ENCODE measurements at regions of chr4 and their contacts with region 1.

Region 1: DNA sequence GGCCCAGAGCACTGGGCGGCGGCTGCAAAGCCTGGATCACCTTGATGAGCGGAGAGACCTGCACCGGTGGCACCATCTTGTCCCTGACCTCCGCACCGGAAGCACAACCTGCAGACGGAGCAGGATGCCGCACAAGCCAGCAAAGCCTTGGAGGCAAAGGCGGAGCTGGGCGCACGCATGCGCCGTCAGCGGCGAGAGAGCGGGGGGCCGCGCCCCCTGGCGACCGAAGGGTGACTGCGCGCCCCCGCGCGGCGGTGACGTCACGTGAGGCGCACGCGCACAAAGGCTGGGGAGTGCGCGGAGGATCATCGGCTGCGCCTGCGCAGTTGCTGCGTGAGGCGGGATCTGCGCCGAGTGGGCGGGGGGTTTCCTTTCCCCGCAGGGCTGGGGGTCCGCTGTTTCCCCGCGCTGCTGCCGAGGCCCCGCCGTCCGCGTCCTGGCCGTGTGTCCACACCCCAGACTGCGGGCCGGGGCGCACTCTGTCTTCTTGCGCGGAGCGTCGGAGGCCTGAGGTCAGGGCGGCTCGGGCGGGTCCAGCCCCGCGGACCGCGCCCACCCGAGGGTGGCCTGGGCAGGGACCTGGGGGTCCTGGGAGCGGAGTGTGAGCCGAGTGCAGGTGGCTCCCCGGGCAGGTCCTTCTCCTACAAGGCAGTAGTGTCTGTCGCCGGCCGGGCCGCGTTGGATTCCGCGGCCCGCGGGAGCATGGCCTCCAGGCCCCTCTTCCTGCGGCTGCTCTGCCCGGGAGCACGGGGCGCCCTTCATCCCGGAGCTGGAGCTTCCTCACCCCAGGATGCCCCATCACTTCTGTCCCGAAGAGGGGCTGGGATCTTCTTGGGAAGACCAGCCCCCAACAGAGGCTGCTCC is at the starts of genes ATP5ME and MYL5:
- DNase-seq: peak; percentile 96 to 99 (median 97)
- H3K4me3 ChIP-seq: peak within 1 kb of the TSS; percentile 100
- H3K27ac ChIP-seq: peak within 1 kb of the TSS; percentile 70 to 97
- H3K4me1 ChIP-seq: peaks cover 17% of the 10 kb centered on the region
- H3K27me3 ChIP-seq: no peaks in the 10 kb centered on the region
- CTCF ChIP-seq: peak; percentile 91 to 98 (median 94)
- EP300 ChIP-seq: peak; percentile 78
- POLR2A ChIP-seq: peak; percentile 92
- total RNA-seq, gene ATP5ME: 180 to 267 (median 189) TPM
- total RNA-seq, gene MYL5: 4.0 to 18.3 (median 10.0) TPM

Region 2: DNA sequence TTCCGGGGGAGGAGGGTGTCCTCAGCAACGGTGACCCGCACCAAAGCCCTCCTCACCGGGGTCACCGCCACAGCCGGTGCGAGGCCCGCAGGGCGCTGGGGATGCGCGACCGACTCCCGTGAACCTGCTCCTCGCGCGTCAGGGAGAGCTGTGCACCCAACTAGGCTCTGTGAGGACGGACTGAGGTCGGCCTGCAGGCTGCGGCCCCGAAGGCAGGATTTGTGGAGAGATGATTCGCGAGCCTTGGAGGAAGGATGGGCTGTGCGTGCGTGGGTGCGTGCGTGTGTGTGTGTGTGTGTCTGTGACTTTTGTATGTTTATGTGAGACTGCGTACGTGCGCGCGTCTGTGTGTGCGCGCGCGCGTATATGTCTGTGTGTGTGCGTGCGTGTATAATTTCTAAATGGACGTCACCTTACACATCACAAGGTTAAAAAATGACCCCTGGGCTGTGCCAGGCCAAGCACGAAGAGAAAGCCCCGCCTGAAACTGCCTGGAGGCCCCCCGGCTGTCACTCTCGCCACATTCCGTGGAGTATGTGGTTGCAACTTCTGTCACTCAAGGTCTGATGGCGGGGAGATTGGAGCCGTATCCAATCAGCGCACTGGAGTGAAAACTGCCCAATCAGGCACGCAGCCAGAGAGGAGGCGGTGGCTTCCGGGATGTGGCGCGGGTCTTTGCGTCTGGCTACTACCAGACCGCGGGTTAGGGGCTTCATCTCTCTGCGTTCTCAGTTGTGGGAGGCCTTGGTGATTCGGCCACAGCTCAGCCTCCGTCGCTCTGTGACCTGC is 337.1 kb before region 1 on chr4 and contains the start of gene ZNF141:
- intact Hi-C with region 1: loop called in 1 of 4 experiments (anchors 5 kb)
- DNase-seq: peak; percentile 96 to 98 (median 97)
- H3K4me3 ChIP-seq: peak within 1 kb of the TSS; percentile 92
- H3K27ac ChIP-seq: peak within 1 kb of the TSS; percentile 92 to 94
- H3K4me1 ChIP-seq: peaks cover 10% of the 10 kb centered on the region
- H3K27me3 ChIP-seq: no peaks in the 10 kb centered on the region
- CTCF ChIP-seq: no peak
- EP300 ChIP-seq: peak; percentile 2
- POLR2A ChIP-seq: peak; percentile 73
- total RNA-seq, gene ZNF141: 30.9 to 55.7 (median 40.4) TPM

Region 3: GRCh38 chr4:592825-593520 is 81.4 kb before region 1 on chr4:
- intact Hi-C with region 1: no loop called
- DNase-seq: no peak
- H3K4me3 ChIP-seq: no peak overlapping the region
- H3K27ac ChIP-seq: no peak overlapping the region
- H3K4me1 ChIP-seq: no peaks in the 10 kb centered on the region
- H3K27me3 ChIP-seq: no peaks in the 10 kb centered on the region
- CTCF ChIP-seq: no peak
- EP300 ChIP-seq: no peak
- POLR2A ChIP-seq: no peak

Region 4: GRCh38 chr4:781493-782216 is 107.3 kb after region 1 on chr4:
- intact Hi-C with region 1: loop called in 1 of 4 experiments (anchors 10 kb)
- DNase-seq: peak; percentile 98 to 99 (median 99)
- H3K4me3 ChIP-seq: peak overlapping the region; percentile 86
- H3K27ac ChIP-seq: peak overlapping the region; percentile 71 to 93
- H3K4me1 ChIP-seq: peaks cover 14% of the 10 kb centered on the region
- H3K27me3 ChIP-seq: no peaks in the 10 kb centered on the region
- CTCF ChIP-seq: no peak
- EP300 ChIP-seq: peak; percentile 26
- POLR2A ChIP-seq: peak; percentile 92

Measured in ovary (tissue), 10 donors.